ENCODE measurements at regions of chr1 and their contacts with region 1.

Region 1: GRCh38 chr1:215393481-215393880 is 173.6 kb upstream of the KCTD3 start:
- DNase-seq: no peak
- H3K4me3 ChIP-seq: no peak overlapping the region
- H3K27ac ChIP-seq: no peak overlapping the region
- H3K27me3 ChIP-seq: no peaks in the 10 kb centered on the region
- CTCF ChIP-seq: no peak

Region 2: GRCh38 chr1:215405211-215405610 is 11.7 kb after region 1 on chr1:
- CTCF ChIA-PET with region 1: no interaction called
- POLR2A ChIA-PET with region 1: interaction called, 12 read pairs
- DNase-seq: no peak
- H3K4me3 ChIP-seq: no peak overlapping the region
- H3K27ac ChIP-seq: no peak overlapping the region
- H3K27me3 ChIP-seq: no peaks in the 10 kb centered on the region
- CTCF ChIP-seq: no peak